Heart right ventricle (tissue), 16 donors: ENCODE measurements at regions of chr1 and their contacts with region 1.

Region 1: GRCh38 chr1:150010393-150011115 is at the start of gene OTUD7B:
- DNase-seq: peak; percentile 86 to 89
- ATAC-seq: peak; percentile 95 to 97 (median 96)
- H3K4me3 ChIP-seq: peak within 1 kb of the TSS; percentile 81 to 97 (median 90)
- H3K27ac ChIP-seq: peak within 1 kb of the TSS; percentile 85 to 97 (median 95)
- H3K4me1 ChIP-seq: peaks cover 7 to 46% (median 35%) of the 10 kb centered on the region in 9 donors
- H3K27me3 ChIP-seq: peaks cover 0 to 96% (median 0%) of the 10 kb centered on the region in 7 donors
- CTCF ChIP-seq: peak in 3 of 9 donors; percentile 9 to 28 (median 21)
- total RNA-seq, gene OTUD7B: 22.7 to 34.4 (median 28.9) TPM

Region 2: DNA sequence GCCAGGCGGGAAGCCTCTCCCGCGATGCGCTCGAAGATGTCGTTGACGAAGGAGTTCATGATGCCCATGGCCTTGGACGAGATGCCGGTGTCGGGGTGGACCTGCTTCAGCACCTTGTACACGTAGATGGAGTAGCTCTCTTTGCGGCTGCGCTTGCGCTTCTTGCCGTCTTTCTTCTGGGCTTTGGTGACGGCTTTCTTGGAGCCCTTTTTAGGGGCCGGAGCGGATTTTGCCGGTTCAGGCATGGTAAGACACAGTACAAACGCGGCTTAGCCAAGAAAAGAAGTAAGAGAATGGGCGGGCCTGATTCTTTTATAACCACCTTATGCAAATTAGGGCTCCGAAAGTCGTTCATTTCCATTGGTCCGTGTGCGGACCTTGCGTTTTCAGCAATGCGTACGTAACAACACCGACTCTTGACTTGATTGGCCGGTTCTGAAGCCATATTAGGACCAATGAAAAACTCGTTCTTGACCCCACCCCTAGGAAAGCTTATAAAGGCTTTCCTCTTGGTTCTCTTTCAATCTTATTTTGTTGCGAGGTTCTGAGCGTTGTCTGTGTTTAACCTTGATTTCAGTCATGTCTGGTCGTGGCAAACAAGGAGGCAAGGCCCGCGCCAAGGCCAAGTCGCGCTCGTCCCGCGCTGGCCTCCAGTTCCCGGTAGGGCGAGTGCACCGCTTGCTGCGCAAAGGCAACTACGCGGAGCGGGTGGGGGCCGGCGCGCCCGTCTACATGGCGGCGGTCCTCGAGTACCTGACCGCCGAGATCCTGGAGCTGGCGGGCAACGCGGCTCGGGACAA is 124.0 kb before region 1 on chr1:
- intact Hi-C with region 1: no loop called
- DNase-seq: peak; percentile 72 to 95
- ATAC-seq: peak; percentile 83 to 91 (median 88)
- H3K4me3 ChIP-seq: peak overlapping the region; percentile 55 to 95 (median 72)
- H3K27ac ChIP-seq: peak overlapping the region; percentile 89 to 100 (median 98)
- H3K4me1 ChIP-seq: peaks cover 0 to 35% (median 30%) of the 10 kb centered on the region in 9 donors
- H3K27me3 ChIP-seq: no peaks in the 10 kb centered on the region
- CTCF ChIP-seq: no peak

Region 3: GRCh38 chr1:149979972-149980540 is 30.5 kb before region 1 on chr1:
- intact Hi-C with region 1: loop called in 1 of 10 experiments (anchors 1 kb)
- DNase-seq: no peak
- ATAC-seq: no peak
- H3K4me3 ChIP-seq: no peak overlapping the region
- H3K27ac ChIP-seq: no peak overlapping the region
- H3K4me1 ChIP-seq: peaks cover 2 to 25% (median 13%) of the 10 kb centered on the region in 9 donors
- H3K27me3 ChIP-seq: peaks cover 0 to 80% (median 0%) of the 10 kb centered on the region in 7 donors
- CTCF ChIP-seq: no peak

Region 4: GRCh38 chr1:150053926-150054325 is 43.4 kb after region 1 on chr1:
- intact Hi-C with region 1: loop called in 2 of 10 experiments (anchors 5 kb)
- DNase-seq: no peak
- ATAC-seq: no peak
- H3K4me3 ChIP-seq: no peak overlapping the region
- H3K27ac ChIP-seq: no peak overlapping the region
- H3K4me1 ChIP-seq: peaks cover 0 to 34% (median 6%) of the 10 kb centered on the region in 9 donors
- H3K27me3 ChIP-seq: peaks cover 0 to 4% (median 0%) of the 10 kb centered on the region in 7 donors
- CTCF ChIP-seq: no peak

Region 5: DNA sequence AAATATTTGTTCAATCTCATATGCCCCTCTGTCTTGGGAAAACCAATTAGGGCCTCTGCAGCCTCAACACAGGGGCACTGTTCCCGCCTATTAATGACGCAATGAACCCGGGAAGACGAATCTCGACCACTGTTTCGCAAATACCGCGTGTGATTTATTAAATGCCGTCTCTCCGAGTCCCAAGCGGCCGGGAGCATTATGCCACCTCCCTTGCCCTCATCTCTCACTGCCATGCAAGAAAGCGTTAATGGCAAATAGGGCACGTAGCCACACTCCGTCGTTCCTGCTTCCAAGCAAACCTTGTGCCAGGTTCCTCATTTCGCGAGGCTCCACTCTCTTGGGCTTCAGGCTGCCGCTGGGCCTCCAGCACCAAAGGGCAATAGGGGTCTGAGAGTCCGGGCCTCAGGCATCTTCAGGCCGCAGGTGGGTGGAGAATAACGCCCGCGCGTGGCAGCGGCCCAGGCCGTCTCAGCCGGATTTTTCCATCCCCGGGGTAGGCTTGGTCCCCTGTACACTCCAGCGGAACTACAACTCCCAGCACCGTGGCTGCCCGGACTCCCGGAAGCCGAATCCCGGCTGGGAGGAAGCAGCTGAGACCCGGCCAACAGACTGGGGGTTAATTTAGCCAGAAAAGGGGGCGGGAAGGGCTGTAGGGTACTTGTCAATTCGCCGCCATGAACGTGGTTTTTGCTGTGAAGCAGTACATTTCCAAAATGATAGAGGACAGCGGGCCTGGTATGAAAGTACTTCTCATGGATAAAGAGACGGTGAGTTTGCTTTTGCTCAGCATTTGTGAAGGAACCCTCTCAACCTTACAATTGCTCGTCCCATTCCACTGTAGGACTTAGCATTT is 56.9 kb after region 1 on chr1 and contains the start of gene VPS45:
- intact Hi-C with region 1: loop called in 3 of 10 experiments (anchors 2 to 10 kb)
- DNase-seq: peak; percentile 89 to 92
- ATAC-seq: peak; percentile 98 to 99 (median 98)
- H3K4me3 ChIP-seq: peak within 1 kb of the TSS; percentile 52 to 90 (median 76)
- H3K27ac ChIP-seq: peak within 1 kb of the TSS; percentile 79 to 96 (median 94)
- H3K4me1 ChIP-seq: peaks cover 0 to 42% (median 24%) of the 10 kb centered on the region in 9 donors
- H3K27me3 ChIP-seq: no peaks in the 10 kb centered on the region
- CTCF ChIP-seq: peak in 2 of 9 donors; percentile 23 to 45
- total RNA-seq, gene VPS45: 41.5 to 73.6 (median 51.9) TPM